ENCODE measurements at regions of chr3 and their contacts with region 1.

Region 1: GRCh38 chr3:8622873-8623691 is 21.5 kb downstream of the SSUH2 start:
- DNase-seq: peak in 1 of 2 experiments; percentile 74
- H3K4me3 ChIP-seq: no peak overlapping the region
- H3K27ac ChIP-seq: no peak overlapping the region
- H3K4me1 ChIP-seq: peaks cover 25% of the 10 kb centered on the region
- H3K27me3 ChIP-seq: no peaks in the 10 kb centered on the region
- CTCF ChIP-seq: peak; percentile 98

Region 2: DNA sequence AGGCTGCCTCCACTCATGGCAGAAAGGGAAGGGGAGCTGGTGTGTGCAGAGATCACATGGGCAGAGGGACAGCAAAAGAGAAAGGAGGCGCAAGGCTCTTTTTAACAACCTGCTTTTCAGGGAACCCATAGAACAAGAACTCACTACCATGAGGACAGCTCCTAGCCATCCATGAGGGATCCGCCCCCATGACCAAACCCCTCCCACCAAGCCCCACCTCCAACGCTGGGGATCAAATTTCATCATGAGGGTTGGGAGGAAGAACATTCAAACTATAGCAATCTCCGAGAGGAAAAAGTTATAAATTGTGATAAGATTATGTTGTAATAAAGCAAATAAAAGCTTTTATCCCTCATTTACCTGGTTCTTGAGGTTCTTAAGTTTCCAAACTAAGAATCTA is 206.1 kb before region 1 on chr3:
- CTCF ChIA-PET with region 1: interaction called, 6 read pairs
- POLR2A ChIA-PET with region 1: no interaction called
- intact Hi-C with region 1: loop called (anchors 5 kb)
- DNase-seq: peak in 1 of 2 experiments; percentile 19
- H3K4me3 ChIP-seq: no peak overlapping the region; the same call in 1 of the 2 replicates
- H3K27ac ChIP-seq: no peak overlapping the region
- H3K4me1 ChIP-seq: no peaks in the 10 kb centered on the region
- H3K27me3 ChIP-seq: no peaks in the 10 kb centered on the region
- CTCF ChIP-seq: no peak

Region 3: GRCh38 chr3:8501371-8502131 is 121.5 kb before region 1 on chr3 and contains the start of gene LMCD1:
- CTCF ChIA-PET with region 1: no interaction called
- POLR2A ChIA-PET with region 1: no interaction called
- intact Hi-C with region 1: loop called (anchors 1 kb)
- DNase-seq: peak; percentile 85 to 94
- H3K4me3 ChIP-seq: peak within 1 kb of the TSS; percentile 78
- H3K27ac ChIP-seq: peak within 1 kb of the TSS; percentile 97
- H3K4me1 ChIP-seq: peaks cover 83% of the 10 kb centered on the region
- H3K27me3 ChIP-seq: no peaks in the 10 kb centered on the region
- CTCF ChIP-seq: no peak
- total RNA-seq, gene LMCD1: 10.0 and 10.3 TPM in 2 replicates

Region 4: GRCh38 chr3:8769088-8769822 is 146.2 kb after region 1 on chr3 and contains the start of gene OXTR:
- CTCF ChIA-PET with region 1: no interaction called
- POLR2A ChIA-PET with region 1: no interaction called
- intact Hi-C with region 1: loop called (anchors 2 kb)
- DNase-seq: peak in 1 of 2 experiments; percentile 80
- H3K4me3 ChIP-seq: peak within 1 kb of the TSS; percentile 53; the same call in 1 of the 2 replicates
- H3K27ac ChIP-seq: no peak within 1 kb of the TSS
- H3K4me1 ChIP-seq: peaks cover 9% of the 10 kb centered on the region; the same call in 1 of the 2 replicates
- H3K27me3 ChIP-seq: no peaks in the 10 kb centered on the region
- CTCF ChIP-seq: peak; percentile 100
- total RNA-seq, gene OXTR: 3.4 and 6.9 TPM in 2 replicates

Region 5: DNA sequence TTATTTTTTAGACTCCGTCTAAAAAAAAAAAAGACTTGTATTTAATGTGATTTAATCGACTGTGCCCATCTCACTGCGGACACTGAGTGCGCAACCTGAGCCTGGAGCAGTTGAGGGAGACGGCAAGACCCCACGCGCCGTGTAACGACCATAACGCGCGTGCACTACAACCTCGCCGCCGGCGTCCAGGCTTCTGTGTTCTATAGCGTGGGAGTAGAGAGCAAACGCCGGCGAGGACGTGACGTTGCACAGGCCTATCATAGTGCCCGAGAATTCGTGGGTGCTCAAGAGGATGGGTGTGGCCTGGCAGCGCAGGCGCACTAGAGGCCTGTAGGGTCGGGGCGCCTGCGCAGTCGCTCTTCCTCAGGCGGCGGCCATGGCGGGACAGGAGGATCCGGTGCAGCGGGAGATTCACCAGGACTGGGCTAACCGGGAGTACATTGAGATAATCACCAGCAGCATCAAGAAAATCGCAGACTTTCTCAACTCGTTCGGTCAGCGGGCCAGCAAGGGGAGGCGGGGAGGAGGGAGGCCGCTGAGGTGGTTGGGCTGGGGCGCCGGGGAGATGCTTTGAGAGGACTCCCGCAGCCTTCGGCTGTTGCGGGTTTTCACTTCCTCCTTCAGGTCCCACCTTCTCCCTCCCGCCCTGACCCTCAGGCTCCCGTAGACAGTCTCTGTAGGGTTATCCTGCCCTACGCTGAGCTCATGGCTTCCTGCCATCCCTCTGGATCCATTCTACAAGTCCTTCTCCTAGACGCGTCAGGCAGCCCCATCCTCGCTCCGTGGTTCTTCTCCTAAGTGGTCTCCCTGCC is 1492.5 kb after region 1 on chr3 and contains the start of gene BRK1:
- CTCF ChIA-PET with region 1: no interaction called
- POLR2A ChIA-PET with region 1: interaction called, 28 read pairs
- intact Hi-C with region 1: no loop called
- DNase-seq: peak; percentile 76 to 84
- H3K4me3 ChIP-seq: peak within 1 kb of the TSS; percentile 75
- H3K27ac ChIP-seq: peak within 1 kb of the TSS; percentile 41; the same call in 1 of the 2 replicates
- H3K4me1 ChIP-seq: peaks cover 8% of the 10 kb centered on the region
- H3K27me3 ChIP-seq: no peaks in the 10 kb centered on the region
- CTCF ChIP-seq: no peak
- total RNA-seq, gene BRK1: 73.8 and 109 TPM in 2 replicates

Measured in PC-9 (cell line).